Endothelial cell of umbilical vein (primary cell): ENCODE measurements at regions of chr2 and their contacts with region 1.

Region 1: GRCh38 chr2:28594289-28595108 is 98.6 kb downstream of the PLB1 start:
- DNase-seq: peak; percentile 92
- H3K4me3 ChIP-seq: no peak overlapping the region
- H3K27ac ChIP-seq: peak overlapping the region; percentile 71
- H3K4me1 ChIP-seq: peaks cover 13% of the 10 kb centered on the region
- H3K27me3 ChIP-seq: no peaks in the 10 kb centered on the region
- CTCF ChIP-seq: peak; percentile 71 to 79
- POLR2A ChIP-seq: peak; percentile 41

Region 2: GRCh38 chr2:27771548-27772335 is 822.8 kb before region 1 on chr2 and contains the start of gene MRPL33:
- CTCF ChIA-PET with region 1: no interaction called
- POLR2A ChIA-PET with region 1: no interaction called
- dilution Hi-C with region 1: no loop called
- intact Hi-C with region 1: no loop called
- DNase-seq: peak; percentile 93
- H3K4me3 ChIP-seq: peak within 1 kb of the TSS; percentile 91 to 95 (median 95)
- H3K27ac ChIP-seq: peak within 1 kb of the TSS; percentile 90
- H3K4me1 ChIP-seq: peaks cover 25% of the 10 kb centered on the region
- H3K27me3 ChIP-seq: no peaks in the 10 kb centered on the region
- CTCF ChIP-seq: no peak
- POLR2A ChIP-seq: peak; percentile 90
- total RNA-seq, gene MRPL33: 96.7 and 97.4 TPM in 2 replicates

Region 3: GRCh38 chr2:28521663-28522062 is 72.8 kb before region 1 on chr2:
- CTCF ChIA-PET with region 1: no interaction called
- POLR2A ChIA-PET with region 1: no interaction called
- dilution Hi-C with region 1: no loop called
- intact Hi-C with region 1: no loop called
- DNase-seq: no peak
- H3K4me3 ChIP-seq: no peak overlapping the region
- H3K27ac ChIP-seq: no peak overlapping the region
- H3K4me1 ChIP-seq: no peaks in the 10 kb centered on the region
- H3K27me3 ChIP-seq: peaks cover 27 to 48% of the 10 kb centered on the region in 2 experiments
- CTCF ChIP-seq: no peak
- POLR2A ChIP-seq: no peak

Region 4: GRCh38 chr2:28577791-28578680 is 16.5 kb before region 1 on chr2:
- CTCF ChIA-PET with region 1: interaction called, 64 read pairs
- POLR2A ChIA-PET with region 1: no interaction called
- dilution Hi-C with region 1: no loop called
- intact Hi-C with region 1: no loop called
- DNase-seq: no peak
- H3K4me3 ChIP-seq: no peak overlapping the region
- H3K27ac ChIP-seq: no peak overlapping the region
- H3K4me1 ChIP-seq: no peaks in the 10 kb centered on the region
- H3K27me3 ChIP-seq: no peaks in the 10 kb centered on the region
- CTCF ChIP-seq: no peak
- POLR2A ChIP-seq: no peak

Region 5: DNA sequence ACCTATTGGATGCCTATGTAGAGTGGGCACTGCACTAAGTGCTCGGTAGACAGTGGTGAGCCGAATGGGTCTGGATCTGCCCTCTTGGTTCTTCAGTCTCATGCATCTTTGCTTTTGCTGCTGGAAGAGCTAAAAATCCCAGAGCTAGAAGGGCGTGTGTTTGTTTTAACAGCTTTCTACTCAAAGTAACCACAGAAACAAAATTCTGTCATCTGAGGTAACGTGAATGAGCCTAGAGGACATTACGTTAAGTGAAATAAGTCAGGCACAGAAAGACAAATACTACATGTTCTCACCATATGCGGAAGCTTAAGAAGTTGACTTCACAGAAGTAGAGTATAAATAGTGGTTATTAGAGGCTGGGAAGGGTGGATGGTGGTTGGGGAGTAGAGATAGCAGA is 21.2 kb after region 1 on chr2:
- CTCF ChIA-PET with region 1: interaction called, 129 read pairs
- POLR2A ChIA-PET with region 1: no interaction called
- dilution Hi-C with region 1: no loop called
- intact Hi-C with region 1: no loop called
- DNase-seq: no peak
- H3K4me3 ChIP-seq: no peak overlapping the region
- H3K27ac ChIP-seq: no peak overlapping the region
- H3K4me1 ChIP-seq: peaks cover 19% of the 10 kb centered on the region
- H3K27me3 ChIP-seq: no peaks in the 10 kb centered on the region
- CTCF ChIP-seq: no peak
- POLR2A ChIP-seq: no peak

Region 6: DNA sequence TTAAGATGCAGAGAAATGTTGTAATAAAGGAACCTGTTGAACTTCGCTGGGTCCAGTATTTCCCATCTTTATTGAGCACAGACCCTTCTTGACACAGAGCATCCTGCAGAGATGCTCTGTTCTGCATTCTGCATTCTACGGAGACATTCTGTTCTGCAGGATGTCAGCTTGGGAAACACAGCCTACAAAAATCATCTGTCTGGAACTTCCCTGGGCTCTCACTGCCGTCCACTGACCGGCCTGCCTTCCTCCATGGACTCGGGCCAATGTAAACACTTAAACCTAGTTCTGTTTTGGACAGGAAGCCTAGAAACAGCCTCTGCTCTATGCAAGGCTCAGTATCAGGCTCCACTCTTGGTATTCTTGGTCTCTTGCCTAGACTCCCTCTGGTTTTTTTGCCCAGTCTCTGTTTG is 67.1 kb after region 1 on chr2:
- CTCF ChIA-PET with region 1: interaction called, 75 read pairs
- POLR2A ChIA-PET with region 1: no interaction called
- dilution Hi-C with region 1: no loop called
- intact Hi-C with region 1: loop called (anchors 1 kb)
- DNase-seq: peak; percentile 90
- H3K4me3 ChIP-seq: no peak overlapping the region
- H3K27ac ChIP-seq: peak overlapping the region; percentile 69
- H3K4me1 ChIP-seq: peaks cover 42% of the 10 kb centered on the region
- H3K27me3 ChIP-seq: no peaks in the 10 kb centered on the region
- CTCF ChIP-seq: no peak
- POLR2A ChIP-seq: no peak

Region 7: GRCh38 chr2:28780496-28780895 is 186.0 kb after region 1 on chr2:
- CTCF ChIA-PET with region 1: interaction called, 12 read pairs
- POLR2A ChIA-PET with region 1: no interaction called
- dilution Hi-C with region 1: no loop called
- intact Hi-C with region 1: no loop called
- DNase-seq: no peak
- H3K4me3 ChIP-seq: no peak overlapping the region
- H3K27ac ChIP-seq: no peak overlapping the region
- H3K4me1 ChIP-seq: no peaks in the 10 kb centered on the region
- H3K27me3 ChIP-seq: no peaks in the 10 kb centered on the region
- CTCF ChIP-seq: no peak
- POLR2A ChIP-seq: no peak